Heart right ventricle (tissue), 16 donors: ENCODE measurements at regions of chr2 and their contacts with region 1.

Region 1: GRCh38 chr2:158456309-158457066 is at the starts of genes CCDC148 and PKP4:
- DNase-seq: peak; percentile 87 to 90
- ATAC-seq: peak; percentile 94 to 98 (median 96)
- H3K4me3 ChIP-seq: peak within 1 kb of the TSS; percentile 57 to 97 (median 91)
- H3K27ac ChIP-seq: peak within 1 kb of the TSS; percentile 73 to 98 (median 96)
- H3K4me1 ChIP-seq: peaks cover 0 to 41% (median 36%) of the 10 kb centered on the region in 9 donors
- H3K27me3 ChIP-seq: no peaks in the 10 kb centered on the region
- CTCF ChIP-seq: peak in 3 of 9 donors; percentile 32 to 48 (median 48)
- total RNA-seq, gene CCDC148: 0.36 to 1.4 (median 0.68) TPM
- total RNA-seq, gene PKP4: 36.2 to 59.0 (median 48.1) TPM

Region 2: GRCh38 chr2:158045362-158045761 is 411.1 kb before region 1 on chr2:
- intact Hi-C with region 1: loop called in 2 of 10 experiments (anchors 10 kb)
- DNase-seq: no peak
- ATAC-seq: no peak
- H3K4me3 ChIP-seq: no peak overlapping the region
- H3K27ac ChIP-seq: no peak overlapping the region
- H3K4me1 ChIP-seq: peaks cover 0 to 34% (median 13%) of the 10 kb centered on the region in 9 donors
- H3K27me3 ChIP-seq: no peaks in the 10 kb centered on the region
- CTCF ChIP-seq: no peak

Region 3: DNA sequence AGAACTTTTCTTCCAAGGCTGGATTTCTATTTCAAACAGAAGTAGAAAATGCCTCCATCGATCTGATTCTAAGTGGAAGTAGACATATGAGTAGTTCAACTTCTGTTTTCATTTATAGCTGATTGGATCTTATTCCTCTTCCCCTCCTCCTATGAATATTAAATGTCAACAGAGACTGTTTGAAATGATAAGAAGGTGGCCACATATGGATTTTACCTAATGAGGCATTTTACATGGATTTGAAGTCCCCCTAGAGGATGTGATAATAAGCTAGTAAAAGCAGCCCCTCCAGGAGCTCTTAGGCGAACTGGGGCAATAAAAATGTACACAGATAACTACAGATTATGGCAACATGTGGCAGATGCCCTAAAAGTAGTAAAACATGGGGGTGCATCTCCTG is 283.8 kb before region 1 on chr2:
- intact Hi-C with region 1: no loop called
- DNase-seq: no peak
- ATAC-seq: no peak
- H3K4me3 ChIP-seq: no peak overlapping the region
- H3K27ac ChIP-seq: no peak overlapping the region
- H3K4me1 ChIP-seq: no peaks in the 10 kb centered on the region
- H3K27me3 ChIP-seq: no peaks in the 10 kb centered on the region
- CTCF ChIP-seq: no peak

Region 4: DNA sequence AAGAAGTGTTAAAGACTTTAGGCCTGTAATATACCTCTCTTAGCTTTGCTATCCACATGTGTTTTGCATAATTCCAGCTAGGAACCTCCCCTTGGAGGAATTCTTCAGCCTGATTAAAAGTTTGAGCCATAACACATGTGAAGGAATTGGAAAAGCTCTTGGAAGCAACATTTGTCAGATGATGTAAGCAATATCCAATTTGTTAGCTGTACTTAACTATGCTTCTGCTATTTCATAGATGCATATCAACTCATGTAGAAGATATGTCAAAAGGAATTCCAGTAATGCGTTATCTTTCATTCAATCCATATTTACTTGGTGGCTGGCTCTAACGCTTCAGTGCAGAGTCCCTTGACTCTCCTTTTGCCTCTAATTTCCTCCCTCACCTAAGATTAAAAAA is 46.5 kb after region 1 on chr2:
- intact Hi-C with region 1: no loop called
- DNase-seq: no peak
- ATAC-seq: no peak
- H3K4me3 ChIP-seq: no peak overlapping the region
- H3K27ac ChIP-seq: no peak overlapping the region
- H3K4me1 ChIP-seq: peaks cover 0 to 66% (median 24%) of the 10 kb centered on the region in 9 donors
- H3K27me3 ChIP-seq: no peaks in the 10 kb centered on the region
- CTCF ChIP-seq: no peak

Region 5: DNA sequence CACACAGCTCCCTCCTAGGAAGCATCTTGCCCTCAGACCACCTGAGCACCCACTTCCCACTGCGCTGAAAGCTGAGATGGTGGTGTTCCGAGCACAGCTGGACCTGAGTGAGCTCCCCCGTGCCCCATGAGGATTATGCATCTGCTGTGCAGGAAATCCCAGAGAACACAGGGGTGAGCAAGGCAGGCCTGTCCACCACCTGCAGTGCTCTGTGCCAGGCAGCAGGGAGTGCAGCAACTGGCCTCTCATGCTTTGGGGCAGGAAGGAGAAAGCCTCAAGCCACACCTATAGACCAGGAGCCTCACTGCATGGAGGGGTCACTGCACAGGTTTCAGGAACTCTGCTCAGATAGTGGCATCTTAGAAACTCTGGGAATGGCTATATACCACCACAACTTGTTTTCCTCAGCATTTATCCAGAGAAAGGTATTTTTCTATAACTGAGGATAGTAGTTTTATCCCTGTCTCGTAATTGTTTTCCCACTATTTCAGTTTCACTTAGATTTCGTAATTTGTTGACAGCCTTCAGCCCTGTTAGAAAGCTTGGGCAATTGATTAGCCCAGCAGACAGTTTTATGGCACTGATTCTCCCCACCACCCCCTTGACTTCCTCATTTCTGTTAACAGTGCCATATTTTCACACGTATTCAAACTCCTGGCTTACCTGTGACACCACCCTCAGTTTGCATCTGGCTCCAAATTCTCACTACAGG is 194.3 kb after region 1 on chr2:
- intact Hi-C with region 1: loop called in 1 of 10 experiments (anchors 10 kb)
- DNase-seq: no peak
- ATAC-seq: peak in 4 of 8 donors; percentile 12 to 61 (median 40)
- H3K4me3 ChIP-seq: no peak overlapping the region
- H3K27ac ChIP-seq: peak overlapping the region in 1 of 10 donors; percentile 28
- H3K4me1 ChIP-seq: peaks cover 0 to 18% (median 0%) of the 10 kb centered on the region in 9 donors
- H3K27me3 ChIP-seq: no peaks in the 10 kb centered on the region
- CTCF ChIP-seq: no peak

Region 6: GRCh38 chr2:158723917-158724690 is 267.6 kb after region 1 on chr2:
- intact Hi-C with region 1: loop called in 1 of 10 experiments (anchors 10 kb)
- DNase-seq: no peak
- ATAC-seq: no peak
- H3K4me3 ChIP-seq: no peak overlapping the region
- H3K27ac ChIP-seq: no peak overlapping the region
- H3K4me1 ChIP-seq: peaks cover 0 to 44% (median 14%) of the 10 kb centered on the region in 9 donors
- H3K27me3 ChIP-seq: no peaks in the 10 kb centered on the region
- CTCF ChIP-seq: peak in 3 of 9 donors; percentile 10 to 18 (median 15)

Region 7: GRCh38 chr2:158753641-158754611 is 297.4 kb after region 1 on chr2:
- intact Hi-C with region 1: loop called (anchors 5 to 10 kb)
- DNase-seq: peak in 1 of 2 donors; percentile 48
- ATAC-seq: peak; percentile 85 to 95 (median 90)
- H3K4me3 ChIP-seq: peak overlapping the region in 9 of 10 donors; percentile 1 to 44 (median 40)
- H3K27ac ChIP-seq: peak overlapping the region in 4 of 10 donors; percentile 6 to 49 (median 23)
- H3K4me1 ChIP-seq: peaks cover 0 to 15% (median 9%) of the 10 kb centered on the region in 9 donors
- H3K27me3 ChIP-seq: no peaks in the 10 kb centered on the region
- CTCF ChIP-seq: peak; percentile 83 to 95 (median 90)